ENCODE measurements at regions of chr10 and their contacts with region 1.

Region 1: GRCh38 chr10:9274206-9274755 is 1219.8 kb downstream of the GATA3 start:
- DNase-seq: no peak
- ATAC-seq: no peak
- H3K4me3 ChIP-seq: no peak overlapping the region
- H3K4me3 Mint-ChIP-seq: no peak overlapping the region
- H3K27ac ChIP-seq: no peak overlapping the region
- H3K27ac Mint-ChIP-seq: no peak overlapping the region
- H3K4me1 ChIP-seq: no peaks in the 10 kb centered on the region
- H3K4me1 Mint-ChIP-seq: no peaks in the 10 kb centered on the region
- H3K27me3 ChIP-seq: peaks cover 0 to 4% of the 10 kb centered on the region in 2 experiments
- H3K27me3 Mint-ChIP-seq: peaks cover 18 to 41% of the 10 kb centered on the region in 2 donors

Region 2: GRCh38 chr10:8088504-8088903 is 1185.8 kb before region 1 on chr10:
- CTCF ChIA-PET with region 1: no interaction called
- POLR2A ChIA-PET with region 1: interaction called in 1 of 2 experiments, 10 read pairs
- DNase-seq: peak in 32 of 35 experiments; percentile 14 to 72 (median 39)
- ATAC-seq: peak; percentile 84 to 98 (median 97)
- H3K4me3 ChIP-seq: no peak overlapping the region
- H3K4me3 Mint-ChIP-seq: no peak overlapping the region
- H3K27ac ChIP-seq: peak overlapping the region; percentile 44
- H3K27ac Mint-ChIP-seq: no peak overlapping the region
- H3K4me1 ChIP-seq: peaks cover 10 to 25% of the 10 kb centered on the region in 2 experiments
- H3K4me1 Mint-ChIP-seq: peaks cover 20 to 27% (median 22%) of the 10 kb centered on the region in 3 donors
- H3K27me3 ChIP-seq: no peaks in the 10 kb centered on the region
- H3K27me3 Mint-ChIP-seq: no peaks in the 10 kb centered on the region

Region 3: DNA sequence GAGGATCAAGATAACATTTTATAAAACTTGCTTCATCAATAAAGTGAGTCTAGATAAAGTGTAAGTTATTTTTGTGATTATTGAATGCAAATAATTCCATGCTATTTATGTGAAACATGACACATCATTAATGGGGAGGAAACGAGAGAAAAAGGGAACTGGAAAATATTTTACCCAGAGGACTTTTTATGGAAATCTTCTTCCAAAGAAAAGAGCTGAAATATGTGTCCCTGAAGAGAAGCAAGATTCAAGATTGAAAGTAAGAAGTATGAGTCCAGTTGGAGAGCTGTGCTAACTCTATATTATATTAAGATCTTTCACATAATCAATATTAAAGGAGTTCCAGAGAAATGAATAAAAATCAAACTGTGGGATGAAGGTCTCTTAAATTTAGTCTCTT is 142.1 kb after region 1 on chr10:
- CTCF ChIA-PET with region 1: no interaction called
- POLR2A ChIA-PET with region 1: no interaction called
- DNase-seq: no peak
- ATAC-seq: no peak
- H3K4me3 ChIP-seq: no peak overlapping the region
- H3K4me3 Mint-ChIP-seq: no peak overlapping the region
- H3K27ac ChIP-seq: no peak overlapping the region
- H3K27ac Mint-ChIP-seq: no peak overlapping the region
- H3K4me1 ChIP-seq: no peaks in the 10 kb centered on the region
- H3K4me1 Mint-ChIP-seq: no peaks in the 10 kb centered on the region
- H3K27me3 ChIP-seq: no peaks in the 10 kb centered on the region
- H3K27me3 Mint-ChIP-seq: peaks cover 6 to 7% of the 10 kb centered on the region in 2 donors

Region 4: DNA sequence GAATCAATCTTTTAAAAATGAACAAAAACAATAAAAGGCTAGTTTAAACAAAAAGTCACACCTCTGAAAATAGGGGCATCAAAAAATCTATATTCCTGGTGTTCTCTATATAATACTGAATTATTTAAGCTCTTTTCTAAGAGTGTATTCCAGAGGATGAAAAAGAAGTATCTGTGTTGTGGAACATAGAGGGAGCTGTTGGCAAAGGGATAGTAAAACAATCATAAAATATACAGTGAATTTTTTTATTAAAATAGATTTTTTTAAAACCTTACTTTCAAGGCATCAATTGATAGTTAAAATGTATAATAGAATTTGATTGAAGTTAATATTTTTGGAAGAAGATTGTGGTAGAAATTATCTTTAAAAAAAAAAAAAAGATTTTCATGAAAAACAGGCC is 334.3 kb after region 1 on chr10:
- CTCF ChIA-PET with region 1: no interaction called
- POLR2A ChIA-PET with region 1: no interaction called
- DNase-seq: no peak
- ATAC-seq: no peak
- H3K4me3 ChIP-seq: no peak overlapping the region
- H3K4me3 Mint-ChIP-seq: no peak overlapping the region
- H3K27ac ChIP-seq: no peak overlapping the region
- H3K27ac Mint-ChIP-seq: no peak overlapping the region
- H3K4me1 ChIP-seq: no peaks in the 10 kb centered on the region
- H3K4me1 Mint-ChIP-seq: no peaks in the 10 kb centered on the region
- H3K27me3 ChIP-seq: no peaks in the 10 kb centered on the region
- H3K27me3 Mint-ChIP-seq: peaks cover 4 to 7% of the 10 kb centered on the region in 2 donors